B cell (primary cell): ENCODE measurements at regions of chr1 and their contacts with region 1.

Region 1: GRCh38 chr1:206684478-206685333 is at the start of gene MAPKAPK2:
- DNase-seq: peak; percentile 83
- ATAC-seq: peak; percentile 70
- H3K4me3 ChIP-seq: peak within 1 kb of the TSS; percentile 69 to 91 (median 87)
- H3K4me3 Mint-ChIP-seq: peak within 1 kb of the TSS; percentile 100
- H3K27ac ChIP-seq: peak within 1 kb of the TSS; percentile 76 to 86
- H3K27ac Mint-ChIP-seq: peak within 1 kb of the TSS; percentile 96
- H3K4me1 ChIP-seq: peaks cover 54 to 72% of the 10 kb centered on the region in 2 donors
- H3K4me1 Mint-ChIP-seq: peaks cover 82% of the 10 kb centered on the region
- H3K27me3 ChIP-seq: no peaks in the 10 kb centered on the region
- H3K27me3 Mint-ChIP-seq: no peaks in the 10 kb centered on the region
- CTCF ChIP-seq: no peak
- total RNA-seq, gene MAPKAPK2: 85.8 and 91.1 TPM in 2 replicates

Region 2: DNA sequence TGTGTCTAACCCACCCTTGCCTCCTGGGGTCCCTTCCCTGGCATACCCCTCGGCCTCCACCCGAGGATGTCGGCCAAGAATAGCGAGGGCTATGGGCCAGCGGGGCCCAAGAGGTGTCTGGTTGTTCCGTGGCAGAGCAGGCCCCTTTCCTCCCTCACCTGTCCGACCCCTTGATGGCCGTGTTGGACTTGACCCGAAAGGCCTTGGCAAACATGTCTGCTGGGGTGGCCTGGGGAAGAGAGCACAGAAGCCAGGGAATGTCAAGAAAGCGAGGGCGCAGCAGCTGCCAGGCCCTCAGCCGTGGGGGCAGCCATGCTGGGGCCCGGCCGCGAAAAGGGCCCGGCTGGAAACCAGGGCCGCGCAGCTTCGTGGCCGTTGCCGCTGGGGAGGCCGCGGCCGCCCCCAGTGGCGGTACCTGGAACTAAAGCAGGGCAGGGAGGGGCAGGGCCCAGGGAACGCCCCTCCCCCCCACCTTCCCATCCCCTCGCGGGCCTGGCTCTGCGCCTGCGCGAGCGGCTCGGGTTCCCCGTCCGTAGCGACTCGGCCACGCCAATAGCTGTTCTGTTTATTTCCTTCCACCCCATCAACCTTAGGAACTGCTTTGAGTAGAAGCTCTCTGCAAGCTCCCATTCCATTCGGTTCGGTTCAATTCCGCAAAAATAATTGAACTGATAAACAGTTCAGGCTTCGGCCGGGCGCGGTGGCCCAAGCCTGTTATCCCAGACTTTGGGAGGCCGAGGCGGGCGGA is 72.4 kb before region 1 on chr1 and contains the start of gene EIF2D:
- CTCF ChIA-PET with region 1: interaction called, 3 read pairs
- POLR2A ChIA-PET with region 1: no interaction called
- intact Hi-C with region 1: loop called (anchors 2 kb)
- DNase-seq: peak; percentile 96
- ATAC-seq: peak; percentile 100
- H3K4me3 ChIP-seq: peak within 1 kb of the TSS; percentile 61 to 87 (median 86)
- H3K4me3 Mint-ChIP-seq: peak within 1 kb of the TSS; percentile 93
- H3K27ac ChIP-seq: peak within 1 kb of the TSS; percentile 70 to 93
- H3K27ac Mint-ChIP-seq: peak within 1 kb of the TSS; percentile 96
- H3K4me1 ChIP-seq: peaks cover 8 to 12% of the 10 kb centered on the region in 2 donors
- H3K4me1 Mint-ChIP-seq: peaks cover 19% of the 10 kb centered on the region
- H3K27me3 ChIP-seq: no peaks in the 10 kb centered on the region
- H3K27me3 Mint-ChIP-seq: no peaks in the 10 kb centered on the region
- CTCF ChIP-seq: peak; percentile 88
- total RNA-seq, gene EIF2D: 60.6 and 62.2 TPM in 2 replicates

Region 3: GRCh38 chr1:206658264-206658980 is 26.3 kb before region 1 on chr1:
- CTCF ChIA-PET with region 1: interaction called, 23 read pairs
- POLR2A ChIA-PET with region 1: interaction called, 4 read pairs
- intact Hi-C with region 1: no loop called
- DNase-seq: peak; percentile 72
- ATAC-seq: peak; percentile 85
- H3K4me3 ChIP-seq: peak overlapping the region in 3 of 5 experiments; percentile 8 to 51 (median 12)
- H3K4me3 Mint-ChIP-seq: peak overlapping the region; percentile 49
- H3K27ac ChIP-seq: no peak overlapping the region
- H3K27ac Mint-ChIP-seq: peak overlapping the region; percentile 1
- H3K4me1 ChIP-seq: peaks cover 16 to 17% of the 10 kb centered on the region in 2 donors
- H3K4me1 Mint-ChIP-seq: peaks cover 21% of the 10 kb centered on the region
- H3K27me3 ChIP-seq: peaks cover 0 to 34% (median 11%) of the 10 kb centered on the region in 4 experiments
- H3K27me3 Mint-ChIP-seq: peaks cover 30% of the 10 kb centered on the region
- CTCF ChIP-seq: peak; percentile 96

Region 4: DNA sequence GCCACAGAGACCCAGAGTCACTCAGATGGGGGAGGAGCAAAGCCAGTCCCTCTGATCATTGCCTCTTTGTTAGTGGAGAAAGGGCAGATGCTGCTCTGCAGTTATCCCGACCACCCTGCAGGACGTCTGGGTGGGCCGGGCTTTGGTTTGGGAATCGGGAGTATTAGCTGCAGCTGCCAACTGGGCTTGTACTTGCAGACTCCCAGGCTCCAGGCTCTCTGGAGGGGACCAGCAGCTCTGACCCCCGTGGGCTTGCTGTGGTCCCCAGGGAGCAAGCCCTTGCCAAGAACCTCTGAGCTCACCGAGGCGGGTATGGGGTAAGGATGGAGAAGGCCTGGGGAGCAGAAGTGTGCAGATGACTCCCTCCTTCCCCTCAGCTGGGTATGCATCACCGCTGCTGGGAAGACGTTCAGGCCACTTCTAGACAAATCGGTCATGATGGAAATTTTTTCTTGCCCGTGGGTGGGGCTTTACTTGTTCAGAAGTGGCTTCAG is 21.6 kb after region 1 on chr1:
- CTCF ChIA-PET with region 1: interaction called, 6 read pairs
- POLR2A ChIA-PET with region 1: interaction called, 3 read pairs
- intact Hi-C with region 1: loop called (anchors 2 kb)
- DNase-seq: no peak
- ATAC-seq: no peak
- H3K4me3 ChIP-seq: no peak overlapping the region
- H3K4me3 Mint-ChIP-seq: peak overlapping the region; percentile 29
- H3K27ac ChIP-seq: no peak overlapping the region
- H3K27ac Mint-ChIP-seq: peak overlapping the region; percentile 57
- H3K4me1 ChIP-seq: peaks cover 79 to 80% of the 10 kb centered on the region in 2 donors
- H3K4me1 Mint-ChIP-seq: peaks cover 90% of the 10 kb centered on the region
- H3K27me3 ChIP-seq: no peaks in the 10 kb centered on the region
- H3K27me3 Mint-ChIP-seq: no peaks in the 10 kb centered on the region
- CTCF ChIP-seq: no peak

Region 5: DNA sequence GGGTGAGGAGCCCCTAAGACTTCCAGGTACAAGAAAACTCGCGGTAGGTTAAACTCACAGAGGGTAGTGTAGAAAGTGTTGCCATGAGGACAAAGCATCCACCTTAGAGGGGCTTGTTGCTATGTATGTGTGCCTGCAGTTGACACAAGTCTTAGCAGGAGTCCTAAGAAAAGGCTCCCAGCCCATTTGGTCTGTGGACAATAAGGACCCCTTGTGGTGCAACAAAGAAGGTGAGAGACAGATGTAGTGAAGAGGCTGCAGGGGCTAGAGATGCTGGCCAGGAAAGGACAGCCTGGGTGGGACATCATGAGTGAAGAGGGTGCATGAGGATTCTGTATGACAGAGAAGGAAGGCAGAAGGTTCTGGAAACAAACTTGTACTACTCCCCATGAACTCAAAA is 123.9 kb after region 1 on chr1:
- CTCF ChIA-PET with region 1: no interaction called
- POLR2A ChIA-PET with region 1: no interaction called
- intact Hi-C with region 1: no loop called
- DNase-seq: peak; percentile 62
- ATAC-seq: peak; percentile 81
- H3K4me3 ChIP-seq: no peak overlapping the region
- H3K4me3 Mint-ChIP-seq: no peak overlapping the region
- H3K27ac ChIP-seq: no peak overlapping the region
- H3K27ac Mint-ChIP-seq: no peak overlapping the region
- H3K4me1 ChIP-seq: peaks cover 8 to 12% of the 10 kb centered on the region in 2 donors
- H3K4me1 Mint-ChIP-seq: peaks cover 27% of the 10 kb centered on the region
- H3K27me3 ChIP-seq: no peaks in the 10 kb centered on the region
- H3K27me3 Mint-ChIP-seq: no peaks in the 10 kb centered on the region
- CTCF ChIP-seq: peak; percentile 50

Region 6: DNA sequence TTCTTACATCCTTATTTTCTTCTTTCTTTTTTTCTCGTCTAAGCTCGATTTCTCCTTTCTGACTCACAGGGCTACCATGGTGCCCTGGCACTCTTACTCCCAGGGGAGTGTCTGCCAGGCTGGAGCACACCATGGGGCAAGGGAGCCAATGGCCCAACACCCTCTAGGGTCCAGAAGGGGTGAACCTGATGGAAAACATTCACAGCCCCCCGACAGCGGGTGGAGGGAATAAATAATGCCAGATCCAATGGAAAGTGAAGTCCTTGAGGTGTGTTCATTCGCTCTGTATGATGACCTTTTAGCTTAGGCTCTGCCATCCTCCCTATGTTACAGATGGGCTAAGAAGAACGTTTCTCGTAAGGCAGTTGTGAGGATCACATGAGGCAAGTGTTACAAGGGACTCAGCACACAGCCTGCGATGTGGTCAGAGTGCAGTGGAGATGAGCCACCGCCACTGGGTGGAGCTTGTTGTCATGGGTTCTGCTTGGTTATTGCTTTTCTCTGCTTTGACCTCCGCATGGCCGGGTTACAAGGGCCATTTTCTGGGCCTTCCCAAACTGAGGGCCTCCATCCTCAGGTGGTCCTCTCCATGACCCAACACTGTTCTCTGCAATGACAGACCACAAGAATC is 240.5 kb after region 1 on chr1:
- CTCF ChIA-PET with region 1: no interaction called
- POLR2A ChIA-PET with region 1: interaction called, 4 read pairs
- intact Hi-C with region 1: loop called (anchors 2 kb)
- DNase-seq: peak; percentile 84
- ATAC-seq: peak; percentile 53
- H3K4me3 ChIP-seq: peak overlapping the region in 1 of 5 experiments; percentile 17
- H3K4me3 Mint-ChIP-seq: no peak overlapping the region
- H3K27ac ChIP-seq: peak overlapping the region; percentile 88 to 96
- H3K27ac Mint-ChIP-seq: no peak overlapping the region
- H3K4me1 ChIP-seq: peaks cover 82 to 84% of the 10 kb centered on the region in 2 donors
- H3K4me1 Mint-ChIP-seq: peaks cover 37% of the 10 kb centered on the region
- H3K27me3 ChIP-seq: no peaks in the 10 kb centered on the region
- H3K27me3 Mint-ChIP-seq: no peaks in the 10 kb centered on the region
- CTCF ChIP-seq: peak; percentile 19